Activated T-helper 2 cell treated with anti-CD3 and anti-CD28 coated beads, Interferon-gamma antibody, Interleukin-2, Interleukin-4, amounts not matched to agents 10 μg/mL and 5 μg/mL and 100 μg/mL, durations not matched to agents 14 hours and 24 hours and 36 hours (primary cell): ENCODE measurements at regions of chr17 and their contacts with region 1.

Region 1: DNA sequence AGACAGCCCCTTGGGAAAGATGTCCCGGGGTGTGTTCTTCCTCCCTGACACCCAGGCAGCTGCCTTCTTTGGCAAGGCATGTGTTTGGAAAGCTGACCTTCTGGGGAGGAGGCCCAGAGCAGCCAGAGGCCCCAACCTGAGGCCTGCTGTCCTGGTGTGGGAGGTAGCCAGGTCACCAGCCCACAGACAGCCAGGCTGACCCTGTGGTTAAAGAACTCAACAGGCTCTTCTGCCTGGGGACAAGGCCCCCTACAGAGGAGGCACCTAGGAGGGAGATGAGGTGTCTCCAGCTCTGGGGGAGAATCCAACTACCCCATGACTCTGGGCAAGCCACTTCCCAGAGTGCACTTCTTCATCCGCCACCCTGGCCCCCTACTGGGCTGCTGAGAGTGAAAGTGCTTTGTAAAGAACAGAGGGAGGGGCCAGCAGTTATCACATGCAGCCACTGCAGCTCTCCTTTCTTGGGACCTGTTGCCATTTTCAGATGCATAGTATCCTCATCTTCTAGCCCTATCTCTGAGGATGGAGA is 13.1 kb upstream of the SREBF1 start:
- DNase-seq: peak; percentile 69
- H3K4me3 Mint-ChIP-seq: peak overlapping the region; percentile 63
- H3K27ac Mint-ChIP-seq: peak overlapping the region; percentile 95
- H3K4me1 Mint-ChIP-seq: peaks cover 66% of the 10 kb centered on the region
- H3K27me3 Mint-ChIP-seq: no peaks in the 10 kb centered on the region

Region 2: GRCh38 chr17:17752089-17752820 is 97.7 kb before region 1 on chr17:
- intact Hi-C with region 1: loop called (anchors 5 kb)
- DNase-seq: peak; percentile 96
- H3K4me3 Mint-ChIP-seq: peak overlapping the region; percentile 89
- H3K27ac Mint-ChIP-seq: peak overlapping the region; percentile 93
- H3K4me1 Mint-ChIP-seq: peaks cover 39% of the 10 kb centered on the region
- H3K27me3 Mint-ChIP-seq: no peaks in the 10 kb centered on the region

Region 3: DNA sequence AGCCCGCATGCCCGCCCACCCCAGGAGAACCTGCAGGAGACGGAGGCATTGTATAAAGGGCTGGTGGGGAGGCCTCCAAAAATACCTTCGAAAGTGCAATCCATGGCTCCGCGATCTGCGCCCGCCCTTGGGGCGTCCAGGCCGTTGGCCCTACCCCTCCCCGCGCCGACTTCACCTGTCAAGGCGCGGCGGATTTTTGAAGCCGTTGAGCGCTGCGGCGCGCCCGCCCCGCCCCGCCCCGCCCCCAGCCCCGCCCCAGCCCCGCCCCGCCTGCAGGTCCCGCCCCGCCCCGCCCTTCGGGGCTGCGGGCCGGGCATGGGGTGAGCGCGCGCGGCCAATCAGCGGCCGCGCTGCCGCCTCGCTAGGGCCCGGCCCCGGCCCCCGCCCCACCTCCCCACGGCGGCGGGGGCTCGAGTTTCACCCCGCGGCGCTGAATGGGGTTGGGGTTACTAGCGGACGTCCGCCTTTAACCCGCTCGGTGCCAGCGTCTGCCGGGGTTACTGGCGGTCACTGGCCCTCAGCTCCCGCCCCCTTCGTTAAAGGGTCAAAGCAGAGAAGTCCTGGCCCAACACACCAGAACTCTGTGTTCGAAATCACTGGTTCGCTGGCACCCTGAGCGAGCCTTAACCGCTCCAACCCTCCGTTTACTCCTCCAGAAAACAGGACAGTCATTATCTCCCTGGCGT is 26.3 kb before region 1 on chr17:
- intact Hi-C with region 1: loop called (anchors 1 kb)
- DNase-seq: peak; percentile 82
- H3K4me3 Mint-ChIP-seq: peak overlapping the region; percentile 77
- H3K27ac Mint-ChIP-seq: peak overlapping the region; percentile 94
- H3K4me1 Mint-ChIP-seq: peaks cover 81% of the 10 kb centered on the region
- H3K27me3 Mint-ChIP-seq: no peaks in the 10 kb centered on the region

Region 4: GRCh38 chr17:17836250-17836817 is 13.6 kb before region 1 on chr17:
- intact Hi-C with region 1: loop called (anchors 1 kb)
- DNase-seq: peak; percentile 95
- H3K4me3 Mint-ChIP-seq: peak overlapping the region; percentile 95
- H3K27ac Mint-ChIP-seq: peak overlapping the region; percentile 92
- H3K4me1 Mint-ChIP-seq: peaks cover 63% of the 10 kb centered on the region
- H3K27me3 Mint-ChIP-seq: no peaks in the 10 kb centered on the region

Region 5: DNA sequence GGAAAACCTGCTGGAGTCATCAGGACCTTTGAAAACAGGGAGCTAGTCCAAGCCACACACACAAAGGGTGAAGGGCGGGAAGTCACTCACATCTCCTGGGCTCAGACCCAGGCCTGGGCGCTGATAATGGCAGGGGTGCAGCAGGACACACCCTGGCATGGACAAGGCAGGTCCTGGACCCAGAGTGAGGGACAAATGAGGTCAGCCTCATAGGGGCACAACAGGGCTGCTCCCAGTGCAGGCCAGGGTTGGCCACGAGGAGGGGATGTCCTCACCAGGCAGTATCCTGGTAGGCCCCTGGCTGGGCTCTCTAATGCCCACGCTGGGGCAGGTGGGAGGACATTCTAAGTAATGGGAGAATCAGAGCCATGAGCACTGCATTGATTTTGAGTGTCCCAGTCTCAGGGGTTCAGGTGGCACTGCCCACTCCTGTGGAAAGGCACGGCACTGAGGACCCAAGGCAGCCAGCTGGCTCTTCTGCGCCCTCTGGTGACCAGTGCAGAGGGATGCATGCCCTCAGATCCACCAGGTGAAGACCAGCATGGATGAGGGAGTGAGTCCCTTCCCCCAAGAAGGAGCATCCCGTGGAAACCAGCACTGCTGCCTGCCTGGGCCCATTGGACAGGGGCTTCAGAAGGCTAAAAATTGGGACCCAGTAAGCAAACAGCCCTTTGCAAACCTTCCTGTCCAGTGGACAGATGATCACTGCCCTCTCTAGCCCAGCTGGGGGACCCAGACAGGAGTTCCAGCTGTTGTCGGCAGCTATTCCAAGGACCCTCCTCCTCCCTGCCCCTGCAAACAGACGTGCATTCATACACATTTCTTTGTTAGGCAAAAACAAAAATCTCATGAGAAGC is 10.2 kb after region 1 on chr17:
- intact Hi-C with region 1: no loop called
- DNase-seq: peak; percentile 50
- H3K4me3 Mint-ChIP-seq: no peak overlapping the region
- H3K27ac Mint-ChIP-seq: no peak overlapping the region
- H3K4me1 Mint-ChIP-seq: peaks cover 20% of the 10 kb centered on the region
- H3K27me3 Mint-ChIP-seq: no peaks in the 10 kb centered on the region

Region 6: DNA sequence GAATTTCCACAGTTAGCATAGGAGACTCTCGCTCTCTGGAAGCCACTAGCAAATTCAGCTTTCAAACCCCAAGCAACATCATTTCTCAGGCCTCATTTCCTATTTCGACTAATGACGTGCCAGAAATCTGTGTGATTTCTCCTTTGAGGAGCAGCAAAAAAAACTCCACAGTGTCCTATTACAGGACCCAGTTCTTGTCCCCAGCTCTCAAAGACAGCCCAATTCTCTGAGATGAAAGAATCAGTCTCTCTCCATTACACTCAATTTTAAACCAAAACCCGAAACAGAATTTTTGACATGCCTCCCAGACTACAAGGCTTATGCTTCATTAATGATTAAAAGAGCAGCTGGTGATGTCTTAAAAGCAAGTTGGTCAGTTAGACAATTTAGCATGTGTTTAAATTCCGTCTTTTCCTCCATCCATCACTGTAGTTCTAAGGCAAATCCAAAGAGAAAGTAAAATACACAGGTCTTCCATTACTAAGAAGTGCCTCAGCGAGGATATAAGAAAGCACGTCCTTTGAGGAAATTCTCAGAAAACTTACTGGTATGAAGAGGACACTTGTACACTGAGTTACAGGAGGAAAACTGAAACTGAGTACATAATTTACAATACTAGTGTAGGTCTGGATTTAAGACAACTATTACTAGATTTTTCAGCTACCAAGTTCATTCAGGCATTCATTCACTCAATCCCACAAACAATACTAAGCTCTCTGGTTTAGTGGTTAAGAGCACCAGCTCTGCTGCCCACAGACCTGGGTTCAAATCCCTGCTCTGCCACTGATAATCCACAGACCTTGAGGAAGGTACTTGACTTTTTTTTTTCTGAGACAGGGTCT is 109.8 kb after region 1 on chr17:
- intact Hi-C with region 1: loop called (anchors 5 kb)
- DNase-seq: no peak
- H3K4me3 Mint-ChIP-seq: peak overlapping the region; percentile 86
- H3K27ac Mint-ChIP-seq: peak overlapping the region; percentile 99
- H3K4me1 Mint-ChIP-seq: peaks cover 52% of the 10 kb centered on the region
- H3K27me3 Mint-ChIP-seq: no peaks in the 10 kb centered on the region